Ascending aorta (tissue), 2 donors: ENCODE measurements at regions of chr6 and their contacts with region 1.

Region 1: GRCh38 chr6:27126815-27127537 is 120.5 kb upstream of the PRSS16 start:
- DNase-seq: peak; percentile 51 to 95
- H3K4me3 ChIP-seq: peak overlapping the region; percentile 39 to 61
- H3K27ac ChIP-seq: peak overlapping the region; percentile 59 to 64
- H3K4me1 ChIP-seq: peaks cover 0 to under 1% of the 10 kb centered on the region in 2 donors
- H3K27me3 ChIP-seq: no peaks in the 10 kb centered on the region
- CTCF ChIP-seq: peak; percentile 75 to 90 (median 75)

Region 2: DNA sequence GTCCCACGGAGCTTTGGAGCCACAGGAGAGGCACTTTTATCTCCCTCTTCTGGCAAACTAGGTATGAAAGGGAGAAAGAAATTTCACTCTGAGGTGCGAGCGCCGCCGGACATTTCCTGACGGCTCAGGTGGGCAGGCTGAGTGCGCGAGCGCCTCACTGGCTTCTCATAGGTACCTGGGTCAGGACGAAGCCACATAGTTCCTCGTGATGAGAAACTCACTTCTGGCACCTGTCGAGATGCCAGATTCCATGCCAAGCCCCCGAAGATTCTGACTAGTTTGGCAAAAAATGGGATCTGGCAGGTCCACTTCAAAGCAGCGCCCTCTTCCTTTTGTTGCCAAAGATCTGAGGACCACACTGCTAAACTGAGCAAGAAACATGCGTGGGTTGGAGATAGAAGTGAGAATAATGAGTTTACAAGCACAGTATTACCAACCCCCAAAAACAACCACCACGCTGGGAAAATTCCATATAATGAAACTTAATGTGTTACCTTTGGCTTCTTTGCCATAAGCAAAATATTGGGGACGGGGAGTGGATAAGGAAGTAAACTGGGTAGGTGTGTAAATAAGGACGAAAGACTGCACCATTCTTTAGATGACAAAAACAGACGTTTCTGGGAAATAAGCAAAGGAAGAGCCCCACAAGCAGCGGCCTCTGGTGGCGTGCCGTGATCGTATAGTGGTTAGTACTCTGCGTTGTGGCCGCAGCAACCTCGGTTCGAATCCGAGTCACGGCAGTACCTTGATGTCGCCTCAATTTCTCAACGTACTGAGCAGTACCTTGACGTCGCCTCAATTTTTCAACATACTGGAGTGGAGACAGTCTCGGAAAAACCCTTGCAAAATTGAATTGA is 30.7 kb after region 1 on chr6:
- intact Hi-C with region 1: loop called (anchors 1 kb)
- DNase-seq: peak in 1 of 2 donors; percentile 83
- H3K4me3 ChIP-seq: peak overlapping the region; percentile 58 to 69
- H3K27ac ChIP-seq: peak overlapping the region in 1 of 2 donors; percentile 11
- H3K4me1 ChIP-seq: peaks cover 0 to 3% of the 10 kb centered on the region in 2 donors
- H3K27me3 ChIP-seq: no peaks in the 10 kb centered on the region
- CTCF ChIP-seq: peak; percentile 32 to 57 (median 46)

Region 3: GRCh38 chr6:28136585-28137504 is 1009.9 kb after region 1 on chr6:
- intact Hi-C with region 1: no loop called
- DNase-seq: peak; percentile 60 to 95
- H3K4me3 ChIP-seq: peak overlapping the region; percentile 74 to 97
- H3K27ac ChIP-seq: peak overlapping the region; percentile 95 to 98
- H3K4me1 ChIP-seq: peaks cover 0 to 26% of the 10 kb centered on the region in 2 donors
- H3K27me3 ChIP-seq: no peaks in the 10 kb centered on the region
- CTCF ChIP-seq: no peak